Brain microvascular endothelial cell (primary cell): ENCODE measurements at regions of chr6 and their contacts with region 1.

Region 1: GRCh38 chr6:16183187-16183664 is 54.3 kb downstream of the MYLIP start:
- DNase-seq: no peak
- H3K4me3 ChIP-seq: no peak overlapping the region
- H3K27ac ChIP-seq: no peak overlapping the region
- H3K27me3 ChIP-seq: no peaks in the 10 kb centered on the region
- CTCF ChIP-seq: peak; percentile 53

Region 2: GRCh38 chr6:15691250-15691869 is 491.9 kb before region 1 on chr6:
- in situ Hi-C with region 1: loop called (anchors 25 kb)
- DNase-seq: peak; percentile 81
- H3K4me3 ChIP-seq: peak overlapping the region; percentile 9
- H3K27ac ChIP-seq: no peak overlapping the region
- H3K27me3 ChIP-seq: peaks cover under 1% of the 10 kb centered on the region
- CTCF ChIP-seq: peak; percentile 100

Region 3: GRCh38 chr6:16028966-16029365 is 154.3 kb before region 1 on chr6:
- in situ Hi-C with region 1: no loop called
- DNase-seq: no peak
- H3K4me3 ChIP-seq: no peak overlapping the region
- H3K27ac ChIP-seq: no peak overlapping the region
- H3K27me3 ChIP-seq: no peaks in the 10 kb centered on the region
- CTCF ChIP-seq: no peak